ENCODE measurements at regions of chr16 and their contacts with region 1.

Region 1: GRCh38 chr16:11797166-11797956 is at the start of gene ZC3H7A:
- DNase-seq: peak; percentile 97
- H3K4me3 ChIP-seq: peak within 1 kb of the TSS; percentile 70 to 100
- H3K27ac ChIP-seq: peak within 1 kb of the TSS; percentile 100
- H3K4me1 ChIP-seq: peaks cover 68% of the 10 kb centered on the region
- H3K27me3 ChIP-seq: no peaks in the 10 kb centered on the region
- CTCF ChIP-seq: peak; percentile 49 to 58 (median 54)
- POLR2A ChIP-seq: peak in 1 of 2 donors; percentile 65
- total RNA-seq, gene ZC3H7A: 67.5 TPM

Region 2: DNA sequence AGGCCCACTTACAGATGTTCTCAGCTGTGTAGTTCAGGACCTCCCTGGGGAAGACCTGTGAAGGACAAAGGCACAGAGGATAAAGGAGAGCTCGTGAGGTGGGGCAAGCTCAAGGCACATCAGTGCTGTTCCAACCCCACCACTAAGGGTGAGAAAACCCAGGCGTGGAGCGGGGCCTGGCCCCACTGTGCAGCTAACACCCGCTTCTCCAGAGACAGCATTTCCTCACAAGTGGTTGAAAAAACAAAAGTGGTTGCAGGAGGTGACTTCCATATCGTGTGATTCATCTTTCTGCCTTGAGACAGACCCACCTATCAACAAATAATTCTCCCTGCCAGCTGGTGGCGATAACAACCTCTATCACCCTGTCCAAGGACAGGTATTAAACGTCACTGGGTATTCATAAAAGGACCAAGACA is 99.1 kb before region 1 on chr16:
- intact Hi-C with region 1: no loop called
- DNase-seq: no peak
- H3K4me3 ChIP-seq: no peak overlapping the region
- H3K27ac ChIP-seq: no peak overlapping the region
- H3K4me1 ChIP-seq: no peaks in the 10 kb centered on the region
- H3K27me3 ChIP-seq: no peaks in the 10 kb centered on the region
- CTCF ChIP-seq: no peak
- POLR2A ChIP-seq: no peak

Region 3: DNA sequence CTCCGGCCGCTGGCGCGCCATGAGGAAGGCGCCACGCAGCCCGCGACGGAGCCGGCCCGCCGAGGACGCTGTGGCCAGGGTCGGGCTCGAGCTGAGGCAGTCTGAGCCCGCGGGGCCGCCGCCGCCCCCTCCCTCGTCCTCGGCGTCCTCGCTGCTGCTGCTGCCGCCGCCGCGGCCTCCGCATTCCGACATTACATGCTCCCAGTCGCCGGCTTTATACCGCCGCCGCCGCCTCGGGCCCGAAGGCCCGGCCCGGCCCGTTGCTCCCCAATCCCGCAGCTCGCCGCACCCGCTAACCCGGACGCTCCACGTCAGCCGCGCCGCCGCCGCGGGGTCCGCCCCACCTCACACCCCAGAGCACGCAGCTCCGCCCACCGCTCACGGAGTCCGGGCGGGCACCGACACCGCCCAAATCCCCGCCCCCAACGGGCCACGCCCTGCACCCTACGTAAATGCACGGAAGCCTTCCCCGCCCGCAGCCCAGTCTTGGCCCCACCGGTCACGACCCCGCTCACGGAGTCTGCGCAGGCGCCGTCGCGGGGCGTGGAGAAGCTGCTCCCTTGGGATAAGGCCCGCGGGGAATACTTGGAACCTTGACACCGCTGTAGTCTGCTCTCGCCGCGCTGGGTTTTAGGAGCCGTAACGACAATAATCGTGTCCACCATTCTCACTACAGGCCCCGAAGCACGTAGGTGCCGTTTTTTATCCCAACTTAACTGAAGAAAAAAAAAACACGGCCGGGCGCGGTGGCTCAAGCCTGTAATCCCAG is 54.6 kb before region 1 on chr16 and contains the start of gene TXNDC11:
- intact Hi-C with region 1: loop called (anchors 2 kb)
- DNase-seq: peak; percentile 98 to 99
- H3K4me3 ChIP-seq: peak within 1 kb of the TSS; percentile 80 to 99
- H3K27ac ChIP-seq: peak within 1 kb of the TSS; percentile 93
- H3K4me1 ChIP-seq: peaks cover 51% of the 10 kb centered on the region
- H3K27me3 ChIP-seq: no peaks in the 10 kb centered on the region
- CTCF ChIP-seq: no peak
- POLR2A ChIP-seq: peak; percentile 48 to 91
- total RNA-seq, gene TXNDC11: 59.4 TPM

Region 4: DNA sequence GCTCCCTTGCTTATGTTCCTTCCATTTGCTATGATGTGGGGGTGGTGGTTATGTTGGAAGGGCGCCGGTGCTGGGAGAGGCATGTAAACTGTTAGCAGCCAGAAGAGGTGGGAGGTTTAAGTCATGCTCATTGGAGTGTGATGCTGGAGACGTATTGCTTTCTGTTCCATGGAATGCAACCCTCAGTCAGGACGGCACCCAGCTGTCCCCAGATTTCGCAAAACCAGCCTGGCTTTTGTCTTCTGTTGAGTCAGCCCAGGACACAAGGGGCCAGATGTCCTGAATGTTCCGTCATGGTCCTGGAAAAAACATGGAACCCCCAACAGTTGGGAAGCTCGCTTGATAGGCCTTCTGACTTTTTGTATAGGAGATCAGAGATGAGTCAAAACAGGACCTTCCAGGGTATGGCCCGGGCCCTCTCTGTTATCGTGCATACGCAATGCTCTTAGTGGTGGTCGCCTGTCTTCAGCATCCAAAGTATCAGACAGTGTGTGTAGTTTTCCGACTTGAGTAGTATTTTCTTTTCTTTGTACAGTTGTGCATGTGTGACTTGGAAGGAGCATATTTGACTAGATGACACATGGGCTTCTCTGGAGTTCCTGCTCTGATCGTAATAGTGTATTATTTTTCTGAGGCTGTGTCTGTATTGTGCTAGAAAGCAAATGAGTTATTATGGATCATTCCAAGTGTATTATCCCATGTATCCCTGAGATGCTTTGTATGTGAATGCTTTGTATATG is 381.1 kb after region 1 on chr16:
- intact Hi-C with region 1: no loop called
- DNase-seq: peak in 1 of 2 donors; percentile 89
- H3K4me3 ChIP-seq: no peak overlapping the region
- H3K27ac ChIP-seq: no peak overlapping the region
- H3K4me1 ChIP-seq: no peaks in the 10 kb centered on the region
- H3K27me3 ChIP-seq: no peaks in the 10 kb centered on the region
- CTCF ChIP-seq: no peak
- POLR2A ChIP-seq: no peak

Measured in vagina (tissue), 2 donors.